Activated B cell treated with CpG ODN at 0.5 μM for 24 hours (primary cell): ENCODE measurements at regions of chr6 and their contacts with region 1.

Region 1: GRCh38 chr6:29649701-29650673 is 6.9 kb upstream of the MOG start:
- DNase-seq: peak; percentile 87
- ATAC-seq: peak; percentile 94
- H3K4me3 Mint-ChIP-seq: peak overlapping the region; percentile 97
- H3K27ac Mint-ChIP-seq: peak overlapping the region; percentile 100
- H3K4me1 Mint-ChIP-seq: peaks cover 17% of the 10 kb centered on the region
- H3K27me3 Mint-ChIP-seq: no peaks in the 10 kb centered on the region
- CTCF ChIP-seq: peak; percentile 89

Region 2: GRCh38 chr6:28696682-28697081 is 953.3 kb before region 1 on chr6:
- CTCF ChIA-PET with region 1: no interaction called
- POLR2A ChIA-PET with region 1: no interaction called
- intact Hi-C with region 1: no loop called
- DNase-seq: no peak
- ATAC-seq: no peak
- H3K4me3 Mint-ChIP-seq: no peak overlapping the region
- H3K27ac Mint-ChIP-seq: no peak overlapping the region
- H3K4me1 Mint-ChIP-seq: no peaks in the 10 kb centered on the region
- H3K27me3 Mint-ChIP-seq: peaks cover 74% of the 10 kb centered on the region
- CTCF ChIP-seq: no peak

Region 3: DNA sequence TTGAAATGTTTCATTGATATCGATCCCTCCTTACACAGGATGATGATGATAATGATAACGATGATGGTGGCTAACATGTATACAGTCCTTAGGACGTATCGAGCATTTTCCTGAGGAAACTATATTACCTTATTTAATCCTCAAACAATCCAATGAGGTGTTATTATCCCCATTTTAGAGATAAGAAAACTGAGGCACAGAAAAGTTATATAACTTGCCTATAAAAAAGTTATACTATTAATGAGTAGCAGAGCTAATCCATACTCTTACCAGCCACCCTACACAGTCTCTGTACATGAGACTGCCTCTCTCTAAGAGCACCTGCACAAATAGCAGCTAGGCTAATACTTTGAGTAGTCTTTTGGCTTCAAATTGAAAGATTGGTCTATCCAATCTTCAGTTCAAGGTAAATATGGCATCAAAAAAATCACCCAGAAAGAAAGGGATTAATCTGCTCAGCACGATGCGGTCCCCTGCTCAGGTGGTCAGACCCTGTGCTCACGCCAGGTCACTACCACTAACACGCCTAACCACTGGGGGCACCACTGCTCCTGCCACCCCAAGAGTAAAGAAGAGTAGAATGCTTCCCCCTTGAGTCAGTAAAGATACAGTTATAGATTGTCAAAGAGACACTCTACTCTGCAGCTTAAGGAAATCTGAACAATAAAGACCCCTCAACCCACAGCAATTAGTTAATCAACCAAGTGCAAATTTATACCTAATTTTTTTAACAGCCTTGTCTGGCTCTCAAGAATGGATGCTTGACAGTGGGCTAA is 32.0 kb before region 1 on chr6:
- CTCF ChIA-PET with region 1: interaction called, 10 read pairs
- POLR2A ChIA-PET with region 1: no interaction called
- intact Hi-C with region 1: no loop called
- DNase-seq: no peak
- ATAC-seq: peak; percentile 56
- H3K4me3 Mint-ChIP-seq: no peak overlapping the region
- H3K27ac Mint-ChIP-seq: no peak overlapping the region
- H3K4me1 Mint-ChIP-seq: no peaks in the 10 kb centered on the region
- H3K27me3 Mint-ChIP-seq: no peaks in the 10 kb centered on the region
- CTCF ChIP-seq: no peak

Region 4: GRCh38 chr6:29665942-29666825 is 16.2 kb after region 1 on chr6:
- CTCF ChIA-PET with region 1: interaction called, 17 read pairs
- POLR2A ChIA-PET with region 1: interaction called, 6 read pairs
- intact Hi-C with region 1: no loop called
- DNase-seq: no peak
- ATAC-seq: no peak
- H3K4me3 Mint-ChIP-seq: no peak overlapping the region
- H3K27ac Mint-ChIP-seq: no peak overlapping the region
- H3K4me1 Mint-ChIP-seq: peaks cover 4% of the 10 kb centered on the region
- H3K27me3 Mint-ChIP-seq: peaks cover 8% of the 10 kb centered on the region
- CTCF ChIP-seq: no peak

Region 5: DNA sequence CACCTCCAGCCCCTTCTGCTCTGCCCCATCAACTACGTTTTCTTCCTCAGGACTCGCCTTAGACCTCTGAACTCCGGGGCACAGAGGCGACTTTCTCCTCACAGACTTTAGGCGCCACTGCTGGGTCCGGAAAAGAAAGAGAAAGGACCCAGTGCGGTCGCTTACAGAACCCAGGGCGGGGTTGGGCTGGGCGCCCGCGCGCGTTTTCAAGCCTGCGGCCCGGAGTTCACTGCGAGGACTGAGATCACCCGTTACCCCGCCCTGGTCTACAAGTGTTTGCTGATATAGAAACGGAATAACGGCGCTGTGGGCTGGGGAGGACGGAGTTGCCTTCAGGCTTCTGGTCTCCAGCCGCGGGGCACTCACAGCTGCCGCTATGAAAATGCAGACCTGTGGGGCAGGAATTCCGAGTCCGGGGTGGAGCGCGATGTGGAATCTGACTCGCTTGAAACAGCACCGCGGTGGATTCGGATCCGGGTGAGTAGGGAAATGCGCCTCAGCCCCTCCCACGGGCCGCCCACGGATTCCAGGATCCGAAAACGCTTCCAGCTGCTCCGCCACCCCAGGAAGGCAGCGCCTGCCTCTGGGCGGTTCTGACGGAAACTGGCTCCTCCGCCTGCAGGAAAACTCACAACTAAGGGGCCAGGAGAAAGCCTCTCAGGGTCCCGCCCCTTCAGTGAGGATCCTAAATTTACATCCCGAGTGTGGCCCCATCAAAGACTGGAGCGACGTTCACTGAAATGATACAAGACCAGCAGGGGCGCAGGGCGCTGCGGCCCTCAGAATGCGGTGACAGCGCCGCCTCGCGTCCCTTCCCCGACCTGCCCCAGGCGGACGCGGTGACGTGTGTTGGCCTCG is 102.7 kb after region 1 on chr6:
- CTCF ChIA-PET with region 1: interaction called, 12 read pairs
- POLR2A ChIA-PET with region 1: interaction called, 14 read pairs
- intact Hi-C with region 1: loop called (anchors 1 kb)
- DNase-seq: peak; percentile 80
- ATAC-seq: peak; percentile 68
- H3K4me3 Mint-ChIP-seq: peak overlapping the region; percentile 96
- H3K27ac Mint-ChIP-seq: peak overlapping the region; percentile 94
- H3K4me1 Mint-ChIP-seq: peaks cover 38% of the 10 kb centered on the region
- H3K27me3 Mint-ChIP-seq: no peaks in the 10 kb centered on the region
- CTCF ChIP-seq: no peak

Region 6: DNA sequence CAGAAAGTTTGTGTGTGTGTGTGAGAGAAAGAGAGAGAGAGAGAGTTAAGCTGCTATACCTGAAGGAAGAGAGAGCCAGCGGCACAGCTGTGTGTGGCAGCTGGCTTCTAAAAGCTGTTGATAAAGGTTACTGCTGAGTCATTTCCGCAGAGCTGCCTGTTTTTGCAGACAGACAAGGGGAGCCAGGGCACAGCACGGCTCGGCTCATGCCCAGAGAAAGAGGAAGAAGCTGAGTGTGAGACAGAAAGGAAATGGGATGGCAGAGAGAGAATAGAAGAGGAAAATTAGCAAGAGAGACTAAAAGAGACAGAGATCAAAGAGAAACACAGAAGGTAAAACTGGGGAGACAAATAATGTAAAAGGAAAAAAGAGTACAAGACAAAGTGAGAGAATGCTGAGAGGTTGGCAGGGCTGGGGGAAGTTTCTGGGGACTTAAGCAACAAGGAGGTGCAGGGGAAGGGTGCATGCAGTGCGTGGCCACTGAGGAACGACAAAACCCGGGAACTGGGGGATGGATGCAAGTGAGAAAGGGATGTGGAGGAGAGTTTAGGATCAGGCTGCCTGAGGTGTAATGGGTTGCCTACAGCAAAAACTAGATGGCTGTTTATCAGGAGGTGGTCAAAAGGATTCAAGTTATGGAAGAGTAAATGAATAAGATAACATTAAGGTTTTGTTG is 315.0 kb after region 1 on chr6:
- CTCF ChIA-PET with region 1: no interaction called
- POLR2A ChIA-PET with region 1: interaction called, 11 read pairs
- intact Hi-C with region 1: no loop called
- DNase-seq: peak; percentile 53
- ATAC-seq: peak; percentile 97
- H3K4me3 Mint-ChIP-seq: peak overlapping the region; percentile 82
- H3K27ac Mint-ChIP-seq: peak overlapping the region; percentile 92
- H3K4me1 Mint-ChIP-seq: peaks cover 53% of the 10 kb centered on the region
- H3K27me3 Mint-ChIP-seq: no peaks in the 10 kb centered on the region
- CTCF ChIP-seq: no peak